ENCODE measurements at regions of chr11 and their contacts with region 1.

Region 1: DNA sequence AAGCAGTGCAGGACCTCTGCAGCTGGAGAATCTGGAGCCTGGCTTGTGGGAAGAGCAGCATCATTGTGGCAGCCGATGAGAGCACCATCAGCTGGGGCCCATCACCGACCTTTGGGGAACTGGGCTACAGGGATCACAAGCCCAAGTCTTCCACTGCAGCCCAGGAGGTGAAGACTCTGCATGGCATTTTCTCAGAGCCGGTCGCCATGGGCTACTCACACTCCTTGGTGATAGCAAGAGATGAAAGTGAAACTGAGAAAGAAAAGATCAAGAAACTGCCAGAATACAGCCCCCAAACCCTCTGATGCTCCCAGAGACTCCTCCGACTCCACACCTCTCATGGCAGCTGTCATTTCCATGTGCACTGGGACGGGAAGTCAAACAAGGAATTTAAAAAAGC is 35.6 kb downstream of the ASRGL1 start:
- DNase-seq: no peak
- H3K4me3 Mint-ChIP-seq: no peak overlapping the region
- H3K27ac Mint-ChIP-seq: no peak overlapping the region
- H3K4me1 Mint-ChIP-seq: no peaks in the 10 kb centered on the region
- H3K27me3 Mint-ChIP-seq: peaks cover 15% of the 10 kb centered on the region
- CTCF ChIP-seq: no peak

Region 2: GRCh38 chr11:62169091-62169847 is 203.6 kb before region 1 on chr11:
- CTCF ChIA-PET with region 1: interaction called, 13 read pairs
- POLR2A ChIA-PET with region 1: no interaction called
- intact Hi-C with region 1: loop called (anchors 1 kb)
- DNase-seq: no peak
- H3K4me3 Mint-ChIP-seq: no peak overlapping the region
- H3K27ac Mint-ChIP-seq: no peak overlapping the region
- H3K4me1 Mint-ChIP-seq: no peaks in the 10 kb centered on the region
- H3K27me3 Mint-ChIP-seq: peaks cover 89% of the 10 kb centered on the region
- CTCF ChIP-seq: no peak

Region 3: GRCh38 chr11:62217191-62217748 is 155.6 kb before region 1 on chr11:
- CTCF ChIA-PET with region 1: interaction called, 12 read pairs
- POLR2A ChIA-PET with region 1: no interaction called
- intact Hi-C with region 1: loop called (anchors 1 kb)
- DNase-seq: peak; percentile 39
- H3K4me3 Mint-ChIP-seq: no peak overlapping the region
- H3K27ac Mint-ChIP-seq: no peak overlapping the region
- H3K4me1 Mint-ChIP-seq: no peaks in the 10 kb centered on the region
- H3K27me3 Mint-ChIP-seq: no peaks in the 10 kb centered on the region
- CTCF ChIP-seq: peak; percentile 36

Region 4: DNA sequence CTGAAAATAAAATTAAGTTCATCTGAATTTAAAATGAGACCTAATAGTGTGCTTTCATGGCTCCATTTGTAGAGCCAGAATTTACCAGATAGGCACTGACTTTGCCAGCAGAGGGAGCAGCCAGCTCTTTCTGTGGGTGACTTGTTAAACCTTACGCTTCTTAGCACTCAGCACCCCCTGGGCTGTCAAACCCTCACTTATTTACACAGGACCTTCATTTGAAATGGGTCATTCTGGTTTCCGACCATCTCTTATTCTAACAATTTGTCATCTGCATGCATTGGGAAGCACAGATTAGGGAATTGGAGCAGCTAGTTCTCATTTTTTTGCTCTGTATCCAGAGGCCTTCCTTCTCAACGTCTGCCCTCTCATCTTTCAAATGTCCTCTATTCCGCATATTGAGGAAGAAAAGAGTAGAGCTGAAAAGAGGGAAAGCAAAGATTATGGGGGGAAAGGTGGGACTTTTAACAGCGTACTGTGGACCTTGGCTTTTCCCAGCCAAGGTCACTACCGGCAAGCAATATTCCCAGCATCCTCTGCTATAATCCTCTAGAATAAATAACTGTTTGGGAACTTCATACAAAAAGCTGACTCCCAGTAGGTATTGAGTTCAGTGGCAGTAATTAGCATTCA is 32.5 kb before region 1 on chr11:
- CTCF ChIA-PET with region 1: interaction called, 16 read pairs
- POLR2A ChIA-PET with region 1: interaction called, 3 read pairs
- intact Hi-C with region 1: loop called (anchors 1 kb)
- DNase-seq: peak; percentile 54
- H3K4me3 Mint-ChIP-seq: no peak overlapping the region
- H3K27ac Mint-ChIP-seq: no peak overlapping the region
- H3K4me1 Mint-ChIP-seq: no peaks in the 10 kb centered on the region
- H3K27me3 Mint-ChIP-seq: peaks cover 46% of the 10 kb centered on the region
- CTCF ChIP-seq: peak; percentile 52

Measured in MCF 10A (cell line).